A549 (cell line): ENCODE measurements at regions of chr6 and their contacts with region 1.

Region 1: DNA sequence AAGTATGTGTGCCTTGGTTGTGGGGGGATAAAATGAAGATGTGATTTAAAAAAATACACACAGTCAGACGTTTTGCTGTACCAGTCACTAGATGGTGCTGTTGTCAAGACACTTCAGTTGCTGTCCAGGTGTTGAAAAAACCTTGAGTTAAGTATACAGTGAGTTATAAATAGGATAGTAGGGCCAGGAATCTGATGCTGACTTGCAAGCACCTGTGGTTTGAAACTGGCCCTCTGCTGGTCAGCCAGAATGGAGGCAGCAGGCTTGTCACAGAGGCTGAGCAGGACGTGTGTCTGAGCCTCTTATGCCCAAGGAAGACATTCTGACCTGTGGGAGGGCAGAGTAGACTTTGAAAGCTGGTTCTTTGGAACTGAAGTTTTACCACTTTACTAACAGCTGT is 27.8 kb downstream of the RNF8 start:
- DNase-seq: peak; percentile 15 to 71
- ATAC-seq: peak; percentile 59 to 79
- H3K4me3 ChIP-seq: no peak overlapping the region
- H3K27ac ChIP-seq: no peak overlapping the region
- H3K4me1 ChIP-seq: no peaks in the 10 kb centered on the region
- CTCF ChIP-seq: peak; percentile 50
- EP300 ChIP-seq: no peak
- POLR2A ChIP-seq: no peak
- RAD21 ChIP-seq: peak; percentile 47 to 50; a peak in 4 of 5 replicates

Region 2: GRCh38 chr6:37369321-37370201 is 12.0 kb before region 1 on chr6:
- CTCF ChIA-PET with region 1: interaction called, 15 read pairs
- POLR2A ChIA-PET with region 1: no interaction called
- DNase-seq: no peak
- ATAC-seq: no peak; a peak in 1 of 6 replicates
- H3K4me3 ChIP-seq: no peak overlapping the region
- H3K27ac ChIP-seq: no peak overlapping the region
- H3K4me1 ChIP-seq: peaks cover 14% of the 10 kb centered on the region; the same call in 2 of the 3 replicates
- CTCF ChIP-seq: no peak
- EP300 ChIP-seq: no peak
- POLR2A ChIP-seq: no peak
- RAD21 ChIP-seq: no peak